ENCODE measurements at regions of chr4 and their contacts with region 1.

Region 1: DNA sequence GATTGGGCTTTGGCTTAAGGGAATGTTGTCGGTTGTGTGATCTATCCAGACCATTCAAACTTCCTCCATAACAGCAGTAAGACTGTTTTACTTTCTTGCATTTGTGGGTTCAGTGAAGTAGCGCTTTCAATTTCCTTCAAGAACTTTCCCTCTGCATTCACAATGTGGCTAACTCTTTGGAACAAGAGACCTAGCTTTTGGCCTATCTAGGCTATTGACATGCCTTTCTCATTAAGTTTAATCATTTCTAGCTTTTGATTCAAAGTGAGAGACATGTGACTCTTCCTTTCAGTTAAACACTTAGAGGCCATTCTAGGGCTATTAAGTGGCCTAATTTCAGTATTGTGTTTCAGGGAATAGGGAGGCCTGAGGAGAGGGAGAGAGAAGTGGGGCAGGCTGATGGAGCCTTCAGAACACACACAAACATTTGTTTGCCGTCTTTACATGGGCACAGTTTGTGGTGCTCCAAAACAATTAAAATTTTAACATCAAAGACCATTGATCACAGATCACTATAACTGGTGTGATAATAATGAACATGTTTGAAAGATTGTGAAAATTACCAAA is 34.1 kb downstream of the ADH5 start:
- DNase-seq: no peak
- ATAC-seq: no peak
- H3K4me3 ChIP-seq: no peak overlapping the region
- H3K4me3 Mint-ChIP-seq: peak overlapping the region in 1 of 10 donors; percentile 16
- H3K27ac ChIP-seq: no peak overlapping the region
- H3K27ac Mint-ChIP-seq: peak overlapping the region in 8 of 9 donors; percentile 23 to 83 (median 34)
- H3K4me1 ChIP-seq: peaks cover 4 to 6% of the 10 kb centered on the region in 2 donors
- H3K4me1 Mint-ChIP-seq: peaks cover 7 to 42% (median 13%) of the 10 kb centered on the region in 7 donors
- H3K27me3 ChIP-seq: no peaks in the 10 kb centered on the region
- H3K27me3 Mint-ChIP-seq: no peaks in the 10 kb centered on the region

Region 2: GRCh38 chr4:98143001-98143899 is 911.3 kb before region 1 on chr4 and contains the start of gene STPG2:
- CTCF ChIA-PET with region 1: interaction called, 4 read pairs
- POLR2A ChIA-PET with region 1: interaction called, 3 read pairs
- intact Hi-C with region 1: loop called in 1 of 2 experiments (anchors 2 kb)
- DNase-seq: peak; percentile 85 to 93 (median 91)
- ATAC-seq: peak; percentile 100
- H3K4me3 ChIP-seq: peak within 1 kb of the TSS; percentile 85
- H3K4me3 Mint-ChIP-seq: peak within 1 kb of the TSS; percentile 87 to 99 (median 94)
- H3K27ac ChIP-seq: peak within 1 kb of the TSS; percentile 84
- H3K27ac Mint-ChIP-seq: peak within 1 kb of the TSS; percentile 96 to 99 (median 98)
- H3K4me1 ChIP-seq: peaks cover 6 to 10% of the 10 kb centered on the region in 2 donors
- H3K4me1 Mint-ChIP-seq: peaks cover 12 to 28% (median 24%) of the 10 kb centered on the region in 7 donors
- H3K27me3 ChIP-seq: no peaks in the 10 kb centered on the region
- H3K27me3 Mint-ChIP-seq: peaks cover 0 to 16% (median 0%) of the 10 kb centered on the region in 5 donors
- total RNA-seq, gene STPG2: 0.19 to 0.47 (median 0.30) TPM in 4 of 5 experiments, not detected in the other

Region 3: DNA sequence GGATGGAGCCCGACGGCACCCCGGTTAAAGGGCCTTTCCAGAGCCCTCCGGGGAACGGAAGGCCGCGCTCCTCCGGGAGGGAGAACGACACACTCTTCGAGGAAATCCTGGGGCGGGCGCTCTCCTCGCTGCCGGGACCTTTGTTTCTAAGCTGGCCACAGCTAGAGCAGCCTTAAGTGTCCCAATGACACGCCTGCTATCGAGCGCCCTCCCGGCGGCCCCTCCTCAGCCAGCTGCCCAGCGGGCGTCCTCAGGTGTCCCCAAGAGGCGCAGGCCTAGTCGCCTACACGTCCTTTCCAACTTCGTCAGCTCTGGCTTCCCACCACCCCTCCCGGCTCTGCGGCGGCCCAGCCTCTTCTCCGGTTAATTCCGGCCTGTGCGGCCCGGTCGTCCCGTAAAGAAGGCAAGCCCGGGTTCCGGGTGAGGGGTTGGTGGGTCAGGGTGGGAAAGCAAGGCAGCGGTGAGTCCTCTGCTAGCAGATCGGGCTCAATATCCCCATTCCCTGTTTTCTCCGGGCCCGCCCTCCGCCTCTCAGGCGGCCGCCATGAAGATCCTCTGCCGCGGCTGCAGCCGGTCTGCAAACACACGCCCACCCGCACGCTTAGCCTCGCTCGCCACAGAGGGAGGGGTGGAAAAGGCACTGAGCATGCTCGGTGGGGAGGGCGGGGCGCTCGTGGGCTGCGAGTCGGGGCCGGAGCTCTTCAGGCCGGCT is 793.8 kb before region 1 on chr4:
- CTCF ChIA-PET with region 1: no interaction called
- POLR2A ChIA-PET with region 1: no interaction called
- intact Hi-C with region 1: loop called in 1 of 2 experiments (anchors 5 kb)
- DNase-seq: peak in 6 of 9 donors; percentile 69 to 95 (median 78)
- ATAC-seq: peak; percentile 85
- H3K4me3 ChIP-seq: peak overlapping the region; percentile 90
- H3K4me3 Mint-ChIP-seq: peak overlapping the region; percentile 92 to 98 (median 94)
- H3K27ac ChIP-seq: peak overlapping the region; percentile 86
- H3K27ac Mint-ChIP-seq: peak overlapping the region; percentile 84 to 97 (median 92)
- H3K4me1 ChIP-seq: peaks cover 5 to 12% of the 10 kb centered on the region in 2 donors
- H3K4me1 Mint-ChIP-seq: peaks cover 31 to 60% (median 54%) of the 10 kb centered on the region in 7 donors
- H3K27me3 ChIP-seq: no peaks in the 10 kb centered on the region
- H3K27me3 Mint-ChIP-seq: no peaks in the 10 kb centered on the region

Region 4: GRCh38 chr4:99028187-99028586 is 26.3 kb before region 1 on chr4:
- CTCF ChIA-PET with region 1: interaction called, 3 read pairs
- POLR2A ChIA-PET with region 1: interaction called, 3 read pairs
- intact Hi-C with region 1: loop called in 1 of 2 experiments (anchors 1 kb)
- DNase-seq: no peak
- ATAC-seq: no peak
- H3K4me3 ChIP-seq: no peak overlapping the region
- H3K4me3 Mint-ChIP-seq: no peak overlapping the region
- H3K27ac ChIP-seq: no peak overlapping the region
- H3K27ac Mint-ChIP-seq: peak overlapping the region in 2 of 9 donors; percentile 12 to 41
- H3K4me1 ChIP-seq: no peaks in the 10 kb centered on the region
- H3K4me1 Mint-ChIP-seq: peaks cover 42 to 81% (median 75%) of the 10 kb centered on the region in 7 donors
- H3K27me3 ChIP-seq: no peaks in the 10 kb centered on the region
- H3K27me3 Mint-ChIP-seq: no peaks in the 10 kb centered on the region

Region 5: GRCh38 chr4:99088481-99089365 is 34.2 kb after region 1 on chr4 and contains the start of gene ADH5:
- CTCF ChIA-PET with region 1: interaction called, 4 read pairs
- POLR2A ChIA-PET with region 1: interaction called, 14 read pairs
- intact Hi-C with region 1: loop called (anchors 1 to 2 kb)
- DNase-seq: peak; percentile 75 to 90 (median 85)
- ATAC-seq: peak; percentile 98
- H3K4me3 ChIP-seq: peak within 1 kb of the TSS; percentile 98
- H3K4me3 Mint-ChIP-seq: peak within 1 kb of the TSS; percentile 93 to 99 (median 98)
- H3K27ac ChIP-seq: peak within 1 kb of the TSS; percentile 85
- H3K27ac Mint-ChIP-seq: peak within 1 kb of the TSS; percentile 94 to 99 (median 98)
- H3K4me1 ChIP-seq: peaks cover 8 to 9% of the 10 kb centered on the region in 2 donors
- H3K4me1 Mint-ChIP-seq: peaks cover 28 to 67% (median 57%) of the 10 kb centered on the region in 7 donors
- H3K27me3 ChIP-seq: no peaks in the 10 kb centered on the region
- H3K27me3 Mint-ChIP-seq: peaks cover 0 to 11% (median 0%) of the 10 kb centered on the region in 5 donors
- total RNA-seq, gene ADH5: 42.7 to 102 (median 74.0) TPM

Region 6: DNA sequence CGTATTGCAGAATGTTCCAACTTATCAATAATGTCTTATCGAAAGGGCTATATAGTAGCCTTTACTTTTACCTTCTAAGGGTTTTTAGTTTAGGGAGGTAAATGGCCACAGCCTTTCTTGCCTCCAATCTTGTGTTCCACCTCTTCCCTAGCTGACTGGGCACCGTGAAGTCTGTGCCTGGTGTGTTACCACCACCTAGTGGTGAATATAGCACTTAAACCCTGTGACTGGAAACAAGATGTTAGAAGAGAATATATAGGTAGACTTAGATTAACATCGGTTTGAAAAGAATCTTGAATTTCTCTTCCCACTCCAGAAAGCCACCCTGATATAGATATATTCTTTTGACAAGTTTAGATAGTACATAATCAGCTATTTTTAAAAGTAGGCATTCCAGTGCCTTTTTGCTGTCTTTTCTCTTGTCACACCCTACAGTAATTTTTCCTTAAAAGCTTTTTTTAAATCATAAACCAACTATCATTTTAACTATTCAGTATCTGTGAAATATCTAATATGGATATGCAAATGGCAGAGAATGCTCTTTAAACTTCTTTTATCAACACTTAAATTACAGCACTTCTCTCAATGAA is 408.5 kb after region 1 on chr4:
- CTCF ChIA-PET with region 1: no interaction called
- POLR2A ChIA-PET with region 1: no interaction called
- intact Hi-C with region 1: loop called in 1 of 2 experiments (anchors 1 kb)
- DNase-seq: peak in 8 of 9 donors; percentile 16 to 62 (median 44)
- ATAC-seq: peak; percentile 82
- H3K4me3 ChIP-seq: no peak overlapping the region
- H3K4me3 Mint-ChIP-seq: no peak overlapping the region
- H3K27ac ChIP-seq: no peak overlapping the region
- H3K27ac Mint-ChIP-seq: no peak overlapping the region
- H3K4me1 ChIP-seq: no peaks in the 10 kb centered on the region
- H3K4me1 Mint-ChIP-seq: no peaks in the 10 kb centered on the region
- H3K27me3 ChIP-seq: no peaks in the 10 kb centered on the region
- H3K27me3 Mint-ChIP-seq: peaks cover 0 to 35% (median 8%) of the 10 kb centered on the region in 5 donors

Measured in naive thymus-derived CD4-positive, alpha-beta T cell (primary cell).